ENCODE measurements at regions of chr3 and their contacts with region 1.

Region 1: DNA sequence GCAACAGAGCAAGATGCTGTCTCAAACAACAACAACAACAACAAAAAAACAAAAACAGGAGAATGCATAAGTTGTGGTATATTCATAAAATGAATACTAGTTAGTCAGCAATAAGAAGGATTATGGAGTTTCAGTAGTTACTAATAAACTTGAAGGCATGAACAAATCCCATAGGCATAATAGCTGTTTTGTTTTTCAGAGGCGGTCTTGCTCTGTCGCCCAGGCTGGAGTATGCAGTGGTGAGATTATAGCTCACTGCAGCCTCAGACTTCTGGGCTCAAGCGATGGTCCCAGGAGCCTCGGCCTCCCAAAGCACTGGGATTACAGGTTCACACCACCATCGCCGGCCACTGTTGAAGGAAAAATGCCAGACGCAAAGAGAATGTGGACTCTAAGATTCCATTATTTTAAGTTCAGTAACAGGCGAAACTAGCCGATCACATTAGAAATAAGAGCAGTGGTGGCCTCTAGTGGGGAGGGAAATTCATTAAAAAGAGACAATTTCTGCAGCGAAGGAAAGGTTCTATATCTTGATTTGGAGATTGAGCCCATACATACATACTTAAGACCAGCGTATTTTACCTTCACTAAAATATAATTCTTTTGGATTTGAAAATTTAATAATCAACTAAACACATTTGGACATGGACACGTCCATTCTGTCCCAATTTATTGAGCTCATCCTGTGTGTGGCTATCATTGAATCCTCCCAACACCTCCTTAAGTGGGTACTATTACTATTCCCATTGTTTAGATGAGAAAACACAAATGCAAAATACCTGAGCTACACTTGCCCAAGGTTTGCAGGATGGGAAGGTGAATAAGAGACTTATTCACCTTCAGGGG is 27.4 kb upstream of the HDAC11 start:
- DNase-seq: peak; percentile 38
- H3K4me3 Mint-ChIP-seq: peak overlapping the region; percentile 84
- H3K27ac Mint-ChIP-seq: peak overlapping the region; percentile 88
- H3K4me1 Mint-ChIP-seq: no peaks in the 10 kb centered on the region
- H3K27me3 Mint-ChIP-seq: no peaks in the 10 kb centered on the region
- CTCF ChIP-seq: peak; percentile 25

Region 2: GRCh38 chr3:13479581-13480339 is 27.0 kb after region 1 on chr3 and contains the start of gene HDAC11:
- CTCF ChIA-PET with region 1: interaction called, 13 read pairs
- intact Hi-C with region 1: no loop called
- DNase-seq: peak; percentile 98
- H3K4me3 Mint-ChIP-seq: peak within 1 kb of the TSS; percentile 80
- H3K27ac Mint-ChIP-seq: peak within 1 kb of the TSS; percentile 24
- H3K4me1 Mint-ChIP-seq: peaks cover 4% of the 10 kb centered on the region
- H3K27me3 Mint-ChIP-seq: no peaks in the 10 kb centered on the region
- CTCF ChIP-seq: no peak
- total RNA-seq, gene HDAC11: 11.8 and 16.5 TPM in 2 replicates